Mammary epithelial cell (primary cell): ENCODE measurements at regions of chr11 and their contacts with region 1.

Region 1: DNA sequence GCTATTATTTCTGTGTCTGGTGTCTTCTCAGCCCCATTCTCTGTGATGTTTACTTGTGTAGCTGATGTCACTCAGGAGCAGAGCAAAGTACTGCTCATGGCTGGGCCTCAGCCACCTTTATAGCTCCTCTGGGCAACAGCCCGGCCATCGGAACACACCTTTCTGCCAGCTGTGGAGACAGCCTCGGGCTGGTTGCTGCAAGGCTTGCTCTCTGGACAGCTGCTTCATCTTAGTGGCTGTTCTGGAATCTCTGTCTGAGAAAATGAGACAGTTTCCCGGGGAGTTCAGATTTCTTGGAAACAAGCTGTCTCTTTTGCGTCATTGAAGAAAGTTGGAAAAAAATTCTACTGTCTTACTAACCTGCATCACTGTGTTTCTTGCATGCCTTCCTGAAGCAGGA is 20.0 kb downstream of the THY1 start:
- DNase-seq: no peak
- H3K4me3 ChIP-seq: no peak overlapping the region
- H3K27ac ChIP-seq: no peak overlapping the region
- H3K4me1 ChIP-seq: no peaks in the 10 kb centered on the region
- H3K27me3 ChIP-seq: no peaks in the 10 kb centered on the region
- CTCF ChIP-seq: no peak

Region 2: GRCh38 chr11:119450590-119451326 is 47.7 kb after region 1 on chr11:
- CTCF ChIA-PET with region 1: no interaction called
- dilution Hi-C with region 1: loop called (anchors 10 kb)
- in situ Hi-C with region 1: no loop called
- intact Hi-C with region 1: no loop called
- DNase-seq: no peak
- H3K4me3 ChIP-seq: no peak overlapping the region
- H3K27ac ChIP-seq: no peak overlapping the region
- H3K4me1 ChIP-seq: peaks cover 5% of the 10 kb centered on the region
- H3K27me3 ChIP-seq: no peaks in the 10 kb centered on the region
- CTCF ChIP-seq: no peak